ENCODE measurements at regions of chr17 and their contacts with region 1.

Region 1: DNA sequence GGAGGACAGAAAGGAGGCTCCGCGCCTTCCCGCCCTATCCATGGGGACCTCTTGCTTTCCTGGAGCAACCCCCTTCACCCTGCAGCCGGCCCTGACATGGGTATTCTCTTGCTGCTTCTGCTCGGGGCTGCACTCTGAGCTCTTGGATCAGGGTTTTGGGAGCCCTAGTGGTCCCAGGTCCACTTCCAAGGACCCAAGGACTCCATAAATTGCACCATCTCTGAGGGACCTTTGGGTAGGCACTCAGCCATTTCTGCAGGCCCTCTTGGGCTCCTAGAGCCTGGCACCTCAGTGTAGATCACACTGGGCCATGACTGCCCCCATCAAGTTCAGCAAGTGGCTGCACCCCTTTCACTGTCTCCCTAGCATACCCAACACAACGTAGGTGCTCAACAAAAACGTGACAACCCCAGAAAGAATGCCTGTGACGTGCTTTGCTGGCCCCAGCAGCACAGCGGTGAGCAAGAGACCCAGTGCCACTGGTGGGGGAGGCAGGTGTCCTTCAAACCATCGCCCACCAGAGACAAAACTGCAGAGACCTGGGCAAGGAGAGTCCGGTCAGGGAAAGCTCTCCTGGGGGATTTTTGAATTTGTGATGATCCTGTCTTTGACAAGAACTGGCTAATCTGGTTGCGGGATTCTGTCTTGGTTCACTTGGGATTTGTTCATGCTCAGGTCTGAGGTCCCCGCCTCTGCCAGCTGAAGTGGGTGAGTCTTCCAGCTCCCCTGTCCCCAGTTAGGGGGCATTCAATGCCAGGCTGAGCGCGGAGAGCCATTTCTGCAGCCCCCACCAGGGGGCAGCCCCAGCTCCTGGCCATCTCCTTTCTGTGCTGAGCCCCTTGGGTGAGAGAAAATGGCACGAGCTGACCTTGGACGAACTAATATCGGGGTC is 2.5 kb upstream of the RAB11FIP4 start:
- DNase-seq: peak in 6 of 10 donors; percentile 61 to 93 (median 67)

Region 2: DNA sequence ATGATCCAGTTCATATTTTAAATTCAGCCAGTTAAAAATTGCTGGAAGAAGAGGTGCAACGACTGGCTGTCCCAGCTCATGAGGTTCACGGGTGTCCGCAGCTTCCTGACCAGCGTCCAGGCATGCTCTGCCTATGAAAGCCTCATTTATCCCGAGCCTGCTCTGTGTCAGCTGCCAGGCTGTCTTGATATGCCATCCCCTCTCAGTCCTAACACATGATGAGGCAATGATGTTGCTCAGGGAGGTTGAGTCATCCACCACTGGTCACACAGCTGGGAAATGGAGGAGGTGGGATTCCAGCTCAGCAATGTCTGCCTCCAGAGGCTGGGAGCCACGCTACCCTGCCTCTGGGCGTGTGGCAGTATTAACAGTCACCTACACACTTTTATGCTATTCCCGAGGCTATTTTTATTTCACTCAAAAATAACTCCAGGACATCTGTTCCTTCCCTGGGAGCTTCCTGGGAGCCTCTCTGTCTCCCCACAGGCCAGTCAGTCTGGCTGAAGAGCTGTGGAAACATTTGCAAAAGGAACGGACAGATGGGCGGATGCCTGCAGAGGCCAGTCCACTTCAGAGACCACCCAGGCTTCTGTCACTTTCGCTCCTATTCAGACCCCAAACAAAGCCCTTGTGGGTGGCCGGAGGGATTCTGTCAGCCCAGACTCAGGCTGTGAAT is 25.0 kb after region 1 on chr17:
- intact Hi-C with region 1: loop called (anchors 2 kb)
- DNase-seq: peak; percentile 58 to 97 (median 78)

Region 3: GRCh38 chr17:31448467-31449077 is 59.6 kb after region 1 on chr17:
- intact Hi-C with region 1: no loop called
- DNase-seq: peak in 2 of 10 donors; percentile 4 to 18

Region 4: GRCh38 chr17:31524926-31525800 is 136.1 kb after region 1 on chr17:
- intact Hi-C with region 1: loop called (anchors 2 kb)
- DNase-seq: peak; percentile 70 to 97 (median 92)

Region 5: GRCh38 chr17:31842183-31843069 is 453.4 kb after region 1 on chr17:
- intact Hi-C with region 1: loop called (anchors 2 kb)
- DNase-seq: peak; percentile 45 to 95 (median 76)

Measured in posterior cingulate gyrus (tissue), 11 donors.